PC-9 (cell line): ENCODE measurements at regions of chr1 and their contacts with region 1.

Region 1: GRCh38 chr1:32263744-32264143 is 12.7 kb downstream of the LCK start:
- DNase-seq: no peak
- H3K4me3 ChIP-seq: no peak overlapping the region
- H3K27ac ChIP-seq: no peak overlapping the region
- H3K4me1 ChIP-seq: no peaks in the 10 kb centered on the region
- H3K27me3 ChIP-seq: no peaks in the 10 kb centered on the region
- CTCF ChIP-seq: no peak

Region 2: DNA sequence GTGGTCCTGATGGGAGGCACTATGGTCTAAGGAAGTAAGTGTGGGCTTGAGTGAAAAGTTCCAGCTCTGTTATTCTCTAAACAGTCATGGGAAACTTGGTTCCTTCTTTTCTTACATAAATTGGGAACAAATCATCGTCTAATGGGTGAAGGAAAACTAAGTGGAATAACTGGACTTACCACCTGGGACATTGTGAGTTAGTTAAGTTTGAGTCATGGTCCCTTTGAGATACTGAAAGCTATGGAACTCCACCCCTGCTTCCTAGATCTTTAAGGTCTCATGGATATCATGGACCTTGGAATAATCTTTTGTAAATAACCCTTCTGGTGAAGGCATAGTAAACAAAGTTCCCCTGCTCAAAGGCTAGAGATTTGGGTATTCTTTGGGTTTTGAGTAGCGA is 100.3 kb before region 1 on chr1:
- CTCF ChIA-PET with region 1: interaction called, 10 read pairs
- POLR2A ChIA-PET with region 1: no interaction called
- intact Hi-C with region 1: no loop called
- DNase-seq: peak in 1 of 2 experiments; percentile 71
- H3K4me3 ChIP-seq: no peak overlapping the region
- H3K27ac ChIP-seq: peak overlapping the region; percentile 42
- H3K4me1 ChIP-seq: peaks cover 8% of the 10 kb centered on the region
- H3K27me3 ChIP-seq: no peaks in the 10 kb centered on the region
- CTCF ChIP-seq: no peak